Gastrocnemius medialis (tissue), 4 donors: ENCODE measurements at regions of chr3 and their contacts with region 1.

Region 1: DNA sequence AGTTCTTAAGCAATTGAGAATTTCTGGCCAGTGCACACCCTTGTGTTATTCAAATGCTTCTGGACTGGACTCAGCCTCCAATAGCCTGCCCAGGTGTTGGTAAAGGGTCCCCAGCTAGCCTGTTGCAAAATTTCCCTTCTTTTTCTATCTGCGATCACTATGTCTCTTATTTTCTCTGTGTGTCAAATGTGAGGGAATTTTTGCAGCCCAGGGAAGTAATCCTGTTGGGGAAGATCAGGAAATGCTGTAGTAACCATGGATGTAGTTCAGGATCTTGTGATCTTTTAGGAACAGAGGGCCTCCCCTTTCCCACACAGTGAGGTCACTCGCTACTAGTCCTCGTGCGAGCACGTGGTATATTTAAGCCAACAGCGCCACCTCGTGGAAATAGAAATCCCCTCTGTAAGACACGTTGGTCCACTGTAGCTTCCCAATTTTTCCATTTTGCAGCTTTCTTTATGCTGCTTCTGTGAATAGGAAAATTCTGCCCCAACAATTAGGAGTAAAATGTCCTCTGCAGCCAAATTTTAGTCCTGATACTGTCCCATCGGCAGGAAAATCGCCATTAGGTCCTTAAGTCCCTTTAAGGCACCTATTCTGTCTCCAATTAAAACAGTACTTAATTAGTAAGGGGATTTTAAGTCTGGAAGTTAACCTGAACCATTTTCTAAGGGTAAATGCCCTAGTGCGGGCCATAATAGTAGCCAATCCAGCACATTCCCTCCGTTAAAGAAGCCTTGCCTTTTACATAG is 4.0 kb upstream of the SMCO1 start:
- DNase-seq: peak; percentile 56 to 71
- ATAC-seq: peak; percentile 60 to 66
- H3K4me3 ChIP-seq: no peak overlapping the region
- H3K27ac ChIP-seq: peak overlapping the region; percentile 7 to 50 (median 25)
- H3K4me1 ChIP-seq: peaks cover 19 to 23% of the 10 kb centered on the region in 2 donors
- H3K27me3 ChIP-seq: no peaks in the 10 kb centered on the region
- CTCF ChIP-seq: peak; percentile 69 to 82 (median 77)
- POLR2A ChIP-seq: no peak

Region 2: DNA sequence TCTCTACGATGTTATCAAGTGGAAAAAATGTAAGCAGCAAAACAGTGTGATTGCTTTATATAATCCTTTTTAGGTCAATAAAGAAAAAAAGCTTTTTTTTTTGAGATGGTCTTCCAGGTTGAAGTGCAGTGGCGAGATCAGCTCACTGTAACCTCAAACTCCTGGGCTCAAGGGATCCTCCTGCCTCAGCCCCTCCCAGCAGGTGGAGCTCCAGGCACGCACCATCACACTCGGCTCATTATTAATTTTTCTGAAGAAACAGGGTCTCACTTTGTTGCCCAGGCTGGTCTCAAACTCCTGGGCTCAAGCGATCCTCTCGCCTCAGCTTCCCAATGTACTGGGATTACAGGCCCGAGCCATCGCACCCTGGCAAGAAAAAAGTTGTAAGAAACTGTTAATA is 32.9 kb before region 1 on chr3:
- in situ Hi-C with region 1: no loop called
- intact Hi-C with region 1: loop called (anchors 1 kb)
- DNase-seq: no peak
- ATAC-seq: no peak
- H3K4me3 ChIP-seq: no peak overlapping the region
- H3K27ac ChIP-seq: no peak overlapping the region
- H3K4me1 ChIP-seq: peaks cover 0 to 6% of the 10 kb centered on the region in 2 donors
- H3K27me3 ChIP-seq: no peaks in the 10 kb centered on the region
- CTCF ChIP-seq: peak; percentile 40 to 70 (median 55)
- POLR2A ChIP-seq: no peak